ENCODE measurements at regions of chr6 and their contacts with region 1.

Region 1: GRCh38 chr6:133553652-133554051 is 312.5 kb downstream of the EYA4 start:
- DNase-seq: peak; percentile 46
- ATAC-seq: peak; percentile 90
- H3K4me3 ChIP-seq: no peak overlapping the region
- H3K27ac ChIP-seq: no peak overlapping the region
- H3K4me1 ChIP-seq: no peaks in the 10 kb centered on the region
- H3K27me3 ChIP-seq: no peaks in the 10 kb centered on the region
- CTCF ChIP-seq: peak; percentile 71
- EP300 ChIP-seq: no peak
- POLR2A ChIP-seq: no peak
- RAD21 ChIP-seq: peak; percentile 40; the same call in 1 of the 2 replicates

Region 2: DNA sequence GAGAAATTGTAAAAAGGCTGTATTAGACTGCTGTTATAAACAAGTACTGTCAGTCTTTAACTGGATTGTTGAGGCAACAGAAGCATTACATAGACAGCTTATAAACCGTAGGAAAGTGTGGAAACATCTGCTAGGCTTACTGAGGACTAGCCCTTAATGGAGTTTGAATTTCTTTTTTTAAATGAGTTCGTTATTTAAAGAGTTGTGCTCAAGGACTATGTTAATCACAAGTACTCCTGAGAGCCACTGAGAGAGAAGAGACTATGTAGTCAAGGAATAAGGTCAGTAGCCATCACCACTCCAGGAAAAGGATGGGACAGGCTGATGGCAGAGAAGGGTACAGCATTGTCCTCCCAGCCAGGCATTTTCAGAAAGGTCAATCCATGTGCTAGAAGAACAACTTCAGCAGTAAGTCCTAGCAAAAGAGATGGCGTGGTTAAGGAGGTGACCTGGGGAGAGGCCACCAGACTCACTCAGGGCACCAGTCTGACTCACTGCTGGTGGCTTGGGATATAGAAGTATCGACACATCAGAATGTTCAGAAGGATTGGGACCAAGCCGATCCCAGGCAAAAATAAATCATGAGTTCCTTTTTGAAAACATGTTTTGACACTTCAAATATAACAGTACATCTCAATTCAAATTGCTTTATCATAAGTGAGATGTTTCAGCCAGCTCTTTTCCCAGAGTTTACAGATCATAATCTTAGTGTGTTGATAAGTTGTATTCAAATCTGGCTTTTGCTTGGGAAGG is 732.8 kb before region 1 on chr6:
- CTCF ChIA-PET with region 1: interaction called, 11 read pairs
- POLR2A ChIA-PET with region 1: no interaction called
- in situ Hi-C with region 1: loop called (anchors 10 kb)
- intact Hi-C with region 1: no loop called
- DNase-seq: peak; percentile 20
- ATAC-seq: peak; percentile 65
- H3K4me3 ChIP-seq: no peak overlapping the region
- H3K27ac ChIP-seq: no peak overlapping the region
- H3K4me1 ChIP-seq: peaks cover 46% of the 10 kb centered on the region
- H3K27me3 ChIP-seq: no peaks in the 10 kb centered on the region; a peak in 1 of 5 replicates
- CTCF ChIP-seq: no peak
- EP300 ChIP-seq: no peak
- POLR2A ChIP-seq: peak; percentile 48 to 76; a peak in 3 of 4 replicates
- RAD21 ChIP-seq: no peak

Region 3: GRCh38 chr6:132830334-132830751 is 723.3 kb before region 1 on chr6:
- CTCF ChIA-PET with region 1: interaction called, 11 read pairs
- POLR2A ChIA-PET with region 1: no interaction called
- in situ Hi-C with region 1: loop called (anchors 10 kb)
- intact Hi-C with region 1: loop called (anchors 1 kb)
- DNase-seq: peak; percentile 33
- ATAC-seq: peak; percentile 81
- H3K4me3 ChIP-seq: no peak overlapping the region
- H3K27ac ChIP-seq: no peak overlapping the region
- H3K4me1 ChIP-seq: no peaks in the 10 kb centered on the region
- H3K27me3 ChIP-seq: peaks cover 0 to 7% of the 10 kb centered on the region in 2 experiments; a peak in 1 of 5 replicates
- CTCF ChIP-seq: peak; percentile 70
- EP300 ChIP-seq: no peak
- POLR2A ChIP-seq: no peak
- RAD21 ChIP-seq: peak; percentile 57; the same call in 1 of the 2 replicates

Region 4: DNA sequence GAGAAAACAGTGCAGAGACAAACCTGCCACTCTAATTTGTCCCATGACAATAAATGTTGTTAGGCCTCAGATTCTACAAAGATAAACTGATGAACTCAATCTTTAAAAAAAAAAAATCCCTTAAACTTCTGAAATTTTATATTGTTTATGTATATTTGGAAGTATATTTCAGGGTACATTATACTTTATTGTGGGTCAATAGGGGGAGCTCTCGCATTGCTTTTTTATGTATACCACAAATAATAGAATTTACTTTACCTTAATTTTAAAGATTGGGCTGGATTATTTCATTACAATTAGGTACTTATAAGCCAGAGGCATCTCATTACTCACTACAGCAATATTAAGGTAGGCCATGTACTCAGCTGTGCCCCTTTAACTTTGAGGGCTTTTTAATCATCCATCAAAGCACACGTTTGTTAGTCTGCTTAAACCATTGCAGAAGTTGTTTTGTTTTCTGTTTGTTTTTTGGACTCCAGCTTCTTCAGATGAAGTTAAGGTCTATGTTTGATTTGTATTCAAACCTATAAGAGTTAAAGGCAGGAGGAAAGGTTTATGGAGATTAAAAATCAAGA is 368.8 kb before region 1 on chr6:
- CTCF ChIA-PET with region 1: interaction called, 4 read pairs
- POLR2A ChIA-PET with region 1: no interaction called
- in situ Hi-C with region 1: no loop called
- intact Hi-C with region 1: loop called (anchors 1 kb)
- DNase-seq: no peak
- ATAC-seq: no peak
- H3K4me3 ChIP-seq: no peak overlapping the region
- H3K27ac ChIP-seq: no peak overlapping the region
- H3K4me1 ChIP-seq: no peaks in the 10 kb centered on the region
- H3K27me3 ChIP-seq: no peaks in the 10 kb centered on the region
- CTCF ChIP-seq: peak; percentile 10; the same call in 1 of the 2 replicates
- EP300 ChIP-seq: no peak
- POLR2A ChIP-seq: no peak
- RAD21 ChIP-seq: no peak

Region 5: DNA sequence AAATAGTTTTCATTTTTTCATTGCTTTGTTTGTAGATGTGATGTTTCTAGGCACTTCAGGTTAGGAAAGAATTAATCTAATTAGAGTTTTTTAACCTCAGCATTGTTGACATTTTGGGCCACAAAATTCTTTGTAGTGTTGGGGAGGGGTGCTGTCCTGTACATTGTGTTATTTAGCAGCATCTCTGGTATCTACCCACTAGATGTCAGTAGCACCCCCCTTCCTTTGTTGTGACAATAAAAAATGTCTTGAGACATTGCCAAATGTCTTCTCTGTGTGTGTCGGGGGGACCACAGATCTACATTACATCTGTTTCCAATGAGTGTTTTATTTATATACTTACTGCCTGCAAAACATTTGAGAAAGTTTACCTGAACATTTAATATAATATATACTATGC is 266.9 kb before region 1 on chr6:
- CTCF ChIA-PET with region 1: no interaction called
- POLR2A ChIA-PET with region 1: no interaction called
- in situ Hi-C with region 1: no loop called
- intact Hi-C with region 1: loop called (anchors 1 kb)
- DNase-seq: no peak
- ATAC-seq: no peak
- H3K4me3 ChIP-seq: no peak overlapping the region
- H3K27ac ChIP-seq: no peak overlapping the region
- H3K4me1 ChIP-seq: no peaks in the 10 kb centered on the region
- H3K27me3 ChIP-seq: no peaks in the 10 kb centered on the region
- CTCF ChIP-seq: 0 out of 2 replicates have a peak, but pooled peaks have one; percentile 9
- EP300 ChIP-seq: no peak
- POLR2A ChIP-seq: no peak
- RAD21 ChIP-seq: no peak

Region 6: GRCh38 chr6:133487174-133487573 is 66.5 kb before region 1 on chr6:
- CTCF ChIA-PET with region 1: no interaction called
- POLR2A ChIA-PET with region 1: no interaction called
- in situ Hi-C with region 1: no loop called
- intact Hi-C with region 1: no loop called
- DNase-seq: no peak
- ATAC-seq: no peak
- H3K4me3 ChIP-seq: no peak overlapping the region
- H3K27ac ChIP-seq: no peak overlapping the region
- H3K4me1 ChIP-seq: no peaks in the 10 kb centered on the region
- H3K27me3 ChIP-seq: no peaks in the 10 kb centered on the region; a peak in 1 of 5 replicates
- CTCF ChIP-seq: no peak
- EP300 ChIP-seq: no peak
- POLR2A ChIP-seq: no peak
- RAD21 ChIP-seq: no peak

Measured in HepG2 (cell line).